ENCODE measurements at regions of chr1 and their contacts with region 1.

Region 1: GRCh38 chr1:39116868-39117728 is 87.4 kb upstream of the MACF1 start:
- DNase-seq: peak; percentile 65
- H3K4me3 Mint-ChIP-seq: no peak overlapping the region
- H3K27ac Mint-ChIP-seq: peak overlapping the region; percentile 5
- H3K4me1 Mint-ChIP-seq: peaks cover 8% of the 10 kb centered on the region
- H3K27me3 Mint-ChIP-seq: no peaks in the 10 kb centered on the region
- CTCF ChIP-seq: no peak

Region 2: DNA sequence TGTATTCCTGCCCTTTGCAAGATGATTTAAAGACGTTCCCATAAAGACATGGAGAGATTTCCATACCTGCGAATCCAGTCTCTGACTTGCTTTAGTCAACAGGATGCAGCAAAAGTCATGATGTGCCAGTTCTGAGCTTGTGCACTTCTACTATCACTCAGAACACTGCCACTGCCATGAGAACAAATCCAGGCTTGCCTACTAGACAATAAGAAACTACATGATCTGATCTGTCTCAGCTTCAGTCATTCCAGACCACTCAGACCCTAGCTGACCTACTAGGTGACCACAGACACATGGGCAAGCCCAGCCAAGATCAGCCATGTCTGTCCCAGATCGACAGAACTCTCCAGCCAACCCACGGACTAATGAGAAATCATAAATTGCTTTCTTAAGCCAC is 476.7 kb before region 1 on chr1:
- CTCF ChIA-PET with region 1: no interaction called
- POLR2A ChIA-PET with region 1: no interaction called
- intact Hi-C with region 1: no loop called
- DNase-seq: no peak
- H3K4me3 Mint-ChIP-seq: no peak overlapping the region
- H3K27ac Mint-ChIP-seq: no peak overlapping the region
- H3K4me1 Mint-ChIP-seq: no peaks in the 10 kb centered on the region
- H3K27me3 Mint-ChIP-seq: peaks cover 45% of the 10 kb centered on the region
- CTCF ChIP-seq: no peak

Region 3: GRCh38 chr1:39127513-39127912 is 10.4 kb after region 1 on chr1:
- CTCF ChIA-PET with region 1: interaction called, 7 read pairs
- POLR2A ChIA-PET with region 1: interaction called, 427 read pairs
- intact Hi-C with region 1: no loop called
- DNase-seq: peak; percentile 92
- H3K4me3 Mint-ChIP-seq: no peak overlapping the region
- H3K27ac Mint-ChIP-seq: peak overlapping the region; percentile 37
- H3K4me1 Mint-ChIP-seq: peaks cover 49% of the 10 kb centered on the region
- H3K27me3 Mint-ChIP-seq: no peaks in the 10 kb centered on the region
- CTCF ChIP-seq: no peak

Region 4: DNA sequence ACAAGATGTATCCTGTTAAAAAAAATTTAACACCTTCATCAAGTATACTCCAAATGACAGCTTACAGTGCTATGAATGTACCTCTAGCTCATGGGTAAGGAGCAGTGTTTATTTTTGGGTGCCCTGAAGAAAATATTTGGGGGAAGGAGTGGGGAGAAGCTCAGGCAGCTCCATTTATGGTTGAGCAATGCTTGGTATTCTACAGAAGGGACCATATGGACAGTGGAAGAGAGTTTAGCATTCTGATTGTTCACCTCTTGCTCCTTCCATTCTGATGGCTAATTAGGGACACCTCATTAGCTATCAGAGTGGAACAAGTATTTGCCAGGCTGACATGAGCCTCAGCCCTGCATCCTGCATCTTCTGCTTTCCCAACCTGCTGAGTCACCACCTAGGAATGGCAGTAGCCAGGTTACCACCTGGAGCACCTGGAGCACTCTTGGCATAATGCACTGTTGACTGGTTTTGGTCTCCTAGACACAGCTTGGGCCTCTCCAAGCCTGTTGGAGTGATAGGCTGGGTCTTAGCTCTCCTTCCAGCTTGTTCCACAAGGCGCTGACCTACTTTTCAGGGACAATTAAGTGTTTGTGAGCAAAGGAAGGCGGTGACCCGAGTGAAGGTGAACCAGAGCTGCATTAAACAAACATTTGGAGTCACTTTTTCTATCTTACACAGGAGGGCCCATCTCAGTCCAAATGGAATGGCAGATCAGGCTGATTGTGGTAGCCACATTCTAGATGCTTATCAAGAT is 25.5 kb after region 1 on chr1:
- CTCF ChIA-PET with region 1: no interaction called
- POLR2A ChIA-PET with region 1: interaction called, 65 read pairs
- intact Hi-C with region 1: no loop called
- DNase-seq: peak; percentile 87
- H3K4me3 Mint-ChIP-seq: no peak overlapping the region
- H3K27ac Mint-ChIP-seq: peak overlapping the region; percentile 49
- H3K4me1 Mint-ChIP-seq: peaks cover 36% of the 10 kb centered on the region
- H3K27me3 Mint-ChIP-seq: no peaks in the 10 kb centered on the region
- CTCF ChIP-seq: no peak

Region 5: DNA sequence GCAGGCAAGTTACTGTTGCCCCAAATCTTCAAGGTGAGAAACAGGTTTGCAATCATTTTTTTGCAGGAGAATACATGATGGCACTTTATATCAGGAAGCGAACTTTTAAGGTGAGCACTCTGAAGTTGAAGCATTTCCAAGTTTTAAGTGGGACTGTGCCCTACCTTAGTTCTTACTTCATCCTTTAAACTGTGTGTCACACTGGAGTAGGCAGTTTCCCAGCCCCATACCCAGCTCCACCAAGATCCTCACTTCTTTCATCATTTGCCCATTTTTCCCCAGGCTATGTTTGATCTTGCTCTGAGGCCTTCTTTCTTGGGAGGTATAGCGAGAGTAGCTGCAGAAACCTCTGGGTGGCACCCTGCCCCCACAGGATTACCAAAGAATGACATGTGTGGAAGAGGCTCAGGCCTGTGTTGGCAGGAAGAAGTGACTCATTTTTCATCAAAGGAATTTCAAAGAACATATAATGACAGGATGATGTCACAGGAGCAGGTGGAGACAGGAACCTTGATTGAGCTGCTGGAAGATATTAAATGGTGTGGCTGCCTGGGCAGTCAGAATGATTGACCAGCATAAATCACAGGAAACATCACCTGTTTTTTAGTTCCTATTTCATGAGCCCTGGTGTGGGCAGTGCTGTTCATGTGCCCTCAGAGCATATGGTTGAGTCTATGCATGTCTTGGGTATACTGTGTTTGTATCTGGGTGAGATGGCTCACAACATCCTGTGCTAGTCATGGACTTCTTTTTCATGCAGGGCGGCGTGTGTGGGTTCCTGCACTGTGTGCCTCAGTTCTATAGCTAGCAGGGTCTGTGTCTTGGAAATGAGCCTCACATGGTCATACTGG is 66.6 kb after region 1 on chr1:
- CTCF ChIA-PET with region 1: interaction called, 4 read pairs
- POLR2A ChIA-PET with region 1: interaction called, 327 read pairs
- intact Hi-C with region 1: no loop called
- DNase-seq: peak; percentile 98
- H3K4me3 Mint-ChIP-seq: peak overlapping the region; percentile 53
- H3K27ac Mint-ChIP-seq: peak overlapping the region; percentile 88
- H3K4me1 Mint-ChIP-seq: peaks cover 52% of the 10 kb centered on the region
- H3K27me3 Mint-ChIP-seq: no peaks in the 10 kb centered on the region
- CTCF ChIP-seq: peak; percentile 29

Region 6: GRCh38 chr1:39398278-39399021 is 281.4 kb after region 1 on chr1:
- CTCF ChIA-PET with region 1: no interaction called
- POLR2A ChIA-PET with region 1: no interaction called
- intact Hi-C with region 1: no loop called
- DNase-seq: peak; percentile 92
- H3K4me3 Mint-ChIP-seq: peak overlapping the region; percentile 47
- H3K27ac Mint-ChIP-seq: peak overlapping the region; percentile 83
- H3K4me1 Mint-ChIP-seq: peaks cover 46% of the 10 kb centered on the region
- H3K27me3 Mint-ChIP-seq: no peaks in the 10 kb centered on the region
- CTCF ChIP-seq: no peak

Region 7: GRCh38 chr1:40373338-40374283 is 1256.5 kb after region 1 on chr1 and contains the start of gene SMAP2:
- CTCF ChIA-PET with region 1: no interaction called
- POLR2A ChIA-PET with region 1: no interaction called
- intact Hi-C with region 1: no loop called
- DNase-seq: peak; percentile 96
- H3K4me3 Mint-ChIP-seq: peak within 1 kb of the TSS; percentile 90
- H3K27ac Mint-ChIP-seq: peak within 1 kb of the TSS; percentile 69
- H3K4me1 Mint-ChIP-seq: peaks cover 19% of the 10 kb centered on the region
- H3K27me3 Mint-ChIP-seq: no peaks in the 10 kb centered on the region
- CTCF ChIP-seq: no peak
- total RNA-seq, gene SMAP2: 20.2 and 21.2 TPM in 2 replicates